ENCODE measurements at regions of chrX and their contacts with region 1.

Region 1: GRCh38 chrX:98350940-98351339 is 1467.2 kb downstream of the RPA4 start:
- DNase-seq: no peak
- ATAC-seq: no peak
- H3K4me3 ChIP-seq: no peak overlapping the region
- H3K4me3 Mint-ChIP-seq: no peak overlapping the region
- H3K27ac ChIP-seq: no peak overlapping the region
- H3K27ac Mint-ChIP-seq: no peak overlapping the region
- H3K4me1 ChIP-seq: no peaks in the 10 kb centered on the region
- H3K4me1 Mint-ChIP-seq: no peaks in the 10 kb centered on the region
- H3K27me3 ChIP-seq: no peaks in the 10 kb centered on the region
- H3K27me3 Mint-ChIP-seq: peaks cover 0 to 5% of the 10 kb centered on the region in 2 donors

Region 2: GRCh38 chrX:97639526-97639925 is 711.4 kb before region 1 on chrX:
- CTCF ChIA-PET with region 1: interaction called in 1 of 2 experiments, 11 read pairs
- POLR2A ChIA-PET with region 1: no interaction called
- DNase-seq: peak in 1 of 35 experiments; percentile 0
- ATAC-seq: peak in 1 of 4 experiments; percentile 35
- H3K4me3 ChIP-seq: no peak overlapping the region
- H3K4me3 Mint-ChIP-seq: no peak overlapping the region
- H3K27ac ChIP-seq: no peak overlapping the region
- H3K27ac Mint-ChIP-seq: no peak overlapping the region
- H3K4me1 ChIP-seq: no peaks in the 10 kb centered on the region
- H3K4me1 Mint-ChIP-seq: peaks cover 0 to 8% (median 7%) of the 10 kb centered on the region in 3 donors
- H3K27me3 ChIP-seq: no peaks in the 10 kb centered on the region
- H3K27me3 Mint-ChIP-seq: peaks cover 0 to 6% of the 10 kb centered on the region in 2 donors

Region 3: GRCh38 chrX:98398542-98398941 is 47.6 kb after region 1 on chrX:
- CTCF ChIA-PET with region 1: no interaction called
- POLR2A ChIA-PET with region 1: no interaction called
- DNase-seq: no peak
- ATAC-seq: no peak
- H3K4me3 ChIP-seq: no peak overlapping the region
- H3K4me3 Mint-ChIP-seq: no peak overlapping the region
- H3K27ac ChIP-seq: no peak overlapping the region
- H3K27ac Mint-ChIP-seq: no peak overlapping the region
- H3K4me1 ChIP-seq: no peaks in the 10 kb centered on the region
- H3K4me1 Mint-ChIP-seq: no peaks in the 10 kb centered on the region
- H3K27me3 ChIP-seq: no peaks in the 10 kb centered on the region
- H3K27me3 Mint-ChIP-seq: peaks cover 0 to 6% of the 10 kb centered on the region in 2 donors